Calu3 (cell line): ENCODE measurements at regions of chr4 and their contacts with region 1.

Region 1: DNA sequence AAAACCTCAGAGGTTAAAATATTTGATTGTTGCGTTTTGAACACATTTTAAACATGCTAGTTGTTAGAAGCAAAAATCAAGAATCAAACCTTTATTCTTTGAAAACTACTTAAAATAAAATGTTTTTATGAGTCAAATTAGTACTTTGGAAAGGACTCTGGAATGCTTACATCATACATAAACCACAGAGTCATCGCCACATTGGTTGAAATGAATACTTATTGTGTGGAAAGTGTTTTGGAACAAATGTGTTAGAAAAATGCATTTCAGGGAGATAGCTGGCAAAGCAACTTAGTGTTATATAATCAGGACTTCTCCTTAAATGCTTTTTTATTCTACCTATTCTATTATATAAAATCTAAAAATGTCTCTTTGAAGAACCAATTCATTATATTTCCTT is 49.4 kb upstream of the CAMK2D start:
- DNase-seq: no peak
- H3K4me3 Mint-ChIP-seq: no peak overlapping the region
- H3K27ac Mint-ChIP-seq: no peak overlapping the region
- H3K4me1 Mint-ChIP-seq: no peaks in the 10 kb centered on the region
- H3K27me3 Mint-ChIP-seq: no peaks in the 10 kb centered on the region
- CTCF ChIP-seq: no peak

Region 2: GRCh38 chr4:113790478-113790877 is 20.4 kb before region 1 on chr4:
- CTCF ChIA-PET with region 1: no interaction called
- intact Hi-C with region 1: no loop called
- DNase-seq: no peak
- H3K4me3 Mint-ChIP-seq: no peak overlapping the region
- H3K27ac Mint-ChIP-seq: no peak overlapping the region
- H3K4me1 Mint-ChIP-seq: no peaks in the 10 kb centered on the region
- H3K27me3 Mint-ChIP-seq: no peaks in the 10 kb centered on the region
- CTCF ChIP-seq: no peak

Region 3: DNA sequence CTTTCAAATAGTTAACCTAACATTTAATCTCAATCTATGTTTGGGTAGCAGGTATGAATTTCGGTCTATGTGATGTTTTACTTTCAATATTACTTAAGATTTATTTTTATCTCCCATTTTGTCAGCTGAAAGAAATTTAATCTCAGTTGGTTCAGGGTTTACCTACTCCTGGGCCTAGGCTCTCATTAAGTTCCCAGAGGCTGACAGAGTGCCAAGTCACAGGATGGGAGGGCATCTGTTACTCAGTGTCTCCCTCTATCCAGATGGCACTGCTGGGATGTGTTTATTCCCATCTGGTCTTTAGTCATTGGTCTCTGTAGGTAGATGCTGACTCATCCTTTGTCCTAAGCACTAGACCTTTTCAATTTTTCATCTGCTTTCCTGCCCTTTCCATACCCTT is 298.0 kb after region 1 on chr4:
- CTCF ChIA-PET with region 1: no interaction called
- intact Hi-C with region 1: loop called (anchors 10 kb)
- DNase-seq: no peak
- H3K4me3 Mint-ChIP-seq: no peak overlapping the region
- H3K27ac Mint-ChIP-seq: no peak overlapping the region
- H3K4me1 Mint-ChIP-seq: no peaks in the 10 kb centered on the region
- H3K27me3 Mint-ChIP-seq: no peaks in the 10 kb centered on the region
- CTCF ChIP-seq: no peak